ENCODE measurements at regions of chr6 and their contacts with region 1.

Region 1: DNA sequence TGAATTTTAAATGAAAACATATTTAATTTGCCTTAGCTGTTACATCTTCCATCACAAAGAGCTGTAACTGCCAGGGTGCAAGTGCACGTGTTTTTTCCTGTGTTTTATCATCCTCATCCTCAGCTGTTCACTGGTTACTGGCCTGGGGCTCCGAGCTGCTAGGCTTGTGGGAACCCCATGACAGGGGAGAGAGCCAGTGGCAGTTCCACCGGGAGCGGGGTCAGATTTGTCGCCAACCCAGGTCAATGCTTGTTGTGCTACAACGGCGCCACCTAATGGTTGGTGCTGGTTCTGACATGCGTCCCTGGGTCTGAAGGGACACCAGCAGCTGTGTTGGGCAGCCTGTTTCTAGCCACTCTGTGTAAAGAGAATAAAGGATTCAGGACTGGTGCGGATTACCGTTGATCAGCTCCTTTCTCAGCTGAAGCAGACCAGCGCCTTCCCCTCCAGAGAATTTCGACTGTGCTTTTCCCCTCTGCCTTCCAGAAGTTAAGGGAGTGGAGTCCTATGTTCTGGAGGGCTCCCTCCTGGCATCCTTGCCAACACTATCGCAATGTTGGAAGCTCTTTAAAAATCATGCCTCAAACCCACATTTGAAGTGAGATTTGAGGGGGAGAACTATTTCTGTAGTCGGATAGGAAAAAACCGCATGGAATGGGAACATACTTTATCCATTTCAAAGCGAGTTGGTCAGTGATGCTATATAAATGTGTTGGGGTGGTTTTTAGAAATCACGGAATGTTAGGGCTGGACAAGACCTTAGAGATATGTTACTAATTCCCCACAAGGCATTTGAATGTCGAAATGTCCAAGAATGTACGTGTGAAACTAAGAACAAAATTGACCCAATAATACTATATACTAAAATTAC is 32.1 kb downstream of the SUMO4 start:
- DNase-seq: peak; percentile 87
- ATAC-seq: peak; percentile 94
- H3K4me3 ChIP-seq: no peak overlapping the region
- H3K27ac ChIP-seq: no peak overlapping the region
- H3K4me1 ChIP-seq: no peaks in the 10 kb centered on the region
- H3K27me3 ChIP-seq: no peaks in the 10 kb centered on the region
- CTCF ChIP-seq: peak; percentile 89

Region 2: DNA sequence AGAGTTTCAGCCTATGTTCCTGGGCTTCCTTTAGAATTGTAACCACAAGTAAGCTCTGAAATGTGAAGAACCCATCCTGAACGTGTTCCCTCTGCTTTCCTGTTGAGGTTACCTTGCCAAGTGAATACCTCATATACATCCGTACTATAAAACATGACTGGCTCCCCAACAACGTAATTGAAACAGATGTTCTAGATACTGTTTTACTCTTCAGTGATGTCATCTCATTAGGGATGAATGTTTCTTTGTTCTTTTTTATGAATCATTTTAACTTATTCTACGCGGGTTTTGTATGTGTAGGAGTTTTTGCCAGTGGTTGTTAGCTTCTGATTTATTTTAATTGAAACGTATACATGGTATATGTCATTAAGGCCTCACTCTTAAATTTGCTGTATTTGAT is 1756.9 kb before region 1 on chr6:
- CTCF ChIA-PET with region 1: no interaction called
- POLR2A ChIA-PET with region 1: no interaction called
- intact Hi-C with region 1: no loop called
- DNase-seq: peak; percentile 19
- ATAC-seq: peak; percentile 70
- H3K4me3 ChIP-seq: no peak overlapping the region
- H3K27ac ChIP-seq: 0 out of 2 replicates have a peak overlapping the region, but pooled peaks have one; percentile 17
- H3K4me1 ChIP-seq: no peaks in the 10 kb centered on the region
- H3K27me3 ChIP-seq: no peaks in the 10 kb centered on the region
- CTCF ChIP-seq: no peak

Region 3: GRCh38 chr6:148835920-148836441 is 596.2 kb before region 1 on chr6:
- CTCF ChIA-PET with region 1: no interaction called
- POLR2A ChIA-PET with region 1: no interaction called
- intact Hi-C with region 1: no loop called
- DNase-seq: peak; percentile 81
- ATAC-seq: peak; percentile 54
- H3K4me3 ChIP-seq: no peak overlapping the region
- H3K27ac ChIP-seq: peak overlapping the region; percentile 35; the same call in 1 of the 2 replicates
- H3K4me1 ChIP-seq: peaks cover 58% of the 10 kb centered on the region
- H3K27me3 ChIP-seq: no peaks in the 10 kb centered on the region
- CTCF ChIP-seq: no peak

Region 4: GRCh38 chr6:149094156-149094555 is 338.0 kb before region 1 on chr6:
- CTCF ChIA-PET with region 1: no interaction called
- POLR2A ChIA-PET with region 1: no interaction called
- intact Hi-C with region 1: no loop called
- DNase-seq: peak; percentile 62
- ATAC-seq: peak; percentile 92
- H3K4me3 ChIP-seq: no peak overlapping the region
- H3K27ac ChIP-seq: 0 out of 2 replicates have a peak overlapping the region, but pooled peaks have one; percentile 11
- H3K4me1 ChIP-seq: peaks cover 19% of the 10 kb centered on the region
- H3K27me3 ChIP-seq: no peaks in the 10 kb centered on the region
- CTCF ChIP-seq: no peak

Region 5: GRCh38 chr6:149168968-149169367 is 263.2 kb before region 1 on chr6:
- CTCF ChIA-PET with region 1: no interaction called
- POLR2A ChIA-PET with region 1: interaction called, 12 read pairs
- intact Hi-C with region 1: no loop called
- DNase-seq: no peak
- ATAC-seq: no peak
- H3K4me3 ChIP-seq: no peak overlapping the region
- H3K27ac ChIP-seq: peak overlapping the region; percentile 65
- H3K4me1 ChIP-seq: peaks cover 30% of the 10 kb centered on the region
- H3K27me3 ChIP-seq: no peaks in the 10 kb centered on the region
- CTCF ChIP-seq: no peak

Region 6: DNA sequence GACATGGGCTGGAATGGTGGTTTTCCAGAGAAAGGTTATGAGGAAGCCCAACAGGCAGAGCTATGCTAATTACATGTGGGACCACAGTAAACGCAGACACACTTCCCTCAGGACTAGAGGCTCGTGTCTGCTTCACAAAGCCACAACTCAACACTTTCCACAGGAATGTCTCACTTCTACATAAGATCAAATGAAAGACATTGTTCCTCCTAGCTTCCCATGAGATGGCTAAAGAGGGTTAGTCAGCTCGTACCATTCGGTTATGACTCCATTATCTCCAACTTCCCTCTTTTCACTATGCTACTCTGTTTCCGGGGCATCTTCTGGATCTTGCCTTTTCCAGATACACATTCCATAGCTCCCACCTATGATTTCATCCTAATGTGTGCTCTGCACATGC is 81.8 kb after region 1 on chr6:
- CTCF ChIA-PET with region 1: no interaction called
- POLR2A ChIA-PET with region 1: no interaction called
- intact Hi-C with region 1: loop called (anchors 1 kb)
- DNase-seq: no peak
- ATAC-seq: no peak
- H3K4me3 ChIP-seq: no peak overlapping the region
- H3K27ac ChIP-seq: no peak overlapping the region
- H3K4me1 ChIP-seq: no peaks in the 10 kb centered on the region
- H3K27me3 ChIP-seq: no peaks in the 10 kb centered on the region
- CTCF ChIP-seq: no peak